Activated T-helper 1 cell treated with anti-CD3 and anti-CD28 coated beads, Interleukin-12 subunit alpha, Interleukin-12 subunit beta, Interleukin-2, Interleukin-4 antibody, amounts not matched to agents 30 ng/mL and 10 ng/mL and 1 ng/mL, durations not matched to agents 14 hours and 24 hours and 36 hours (primary cell): ENCODE measurements at regions of chr7 and their contacts with region 1.

Region 1: GRCh38 chr7:23105644-23106056 is at the start of gene KLHL7:
- DNase-seq: peak; percentile 95
- H3K4me3 Mint-ChIP-seq: peak within 1 kb of the TSS; percentile 94
- H3K27ac Mint-ChIP-seq: peak within 1 kb of the TSS; percentile 96
- H3K4me1 Mint-ChIP-seq: peaks cover 30% of the 10 kb centered on the region
- H3K27me3 Mint-ChIP-seq: no peaks in the 10 kb centered on the region
- total RNA-seq, gene KLHL7: 18.2 and 19.7 TPM in 2 replicates

Region 2: DNA sequence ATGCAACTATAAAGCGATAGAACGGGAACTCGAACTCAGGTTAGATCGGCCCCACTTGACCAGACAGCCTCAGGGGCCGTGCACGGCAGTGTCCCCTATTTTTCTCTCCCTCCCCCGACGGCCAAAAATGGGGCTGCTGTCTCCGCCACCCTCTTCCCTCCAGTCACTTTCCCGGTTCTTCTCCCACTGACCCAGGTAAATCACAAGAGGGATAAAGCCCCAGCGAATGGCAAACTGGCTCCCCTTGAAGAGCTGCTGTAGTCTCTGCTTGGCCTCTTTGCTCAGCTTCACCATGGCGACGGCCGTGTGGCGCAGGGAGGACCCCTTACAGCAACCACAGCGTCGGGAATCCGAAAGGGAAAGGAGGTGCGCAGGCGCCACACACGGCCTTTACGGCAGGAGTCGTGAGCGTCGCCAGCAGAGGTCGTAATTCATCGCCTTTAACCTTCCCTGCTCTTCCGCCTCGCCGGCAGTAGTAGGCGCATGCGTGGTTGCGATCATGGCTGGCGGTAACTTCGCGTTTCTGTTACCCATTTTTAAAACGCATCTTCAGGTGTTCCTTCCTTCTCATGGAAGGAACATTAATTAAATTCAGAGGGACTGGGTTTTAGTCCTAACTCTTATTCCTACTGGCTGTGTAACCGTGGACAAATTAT is 283.0 kb before region 1 on chr7 and contains the start of gene TOMM7:
- intact Hi-C with region 1: loop called (anchors 5 kb)
- DNase-seq: peak; percentile 81
- H3K4me3 Mint-ChIP-seq: peak within 1 kb of the TSS; percentile 98
- H3K27ac Mint-ChIP-seq: peak within 1 kb of the TSS; percentile 93
- H3K4me1 Mint-ChIP-seq: peaks cover 41% of the 10 kb centered on the region
- H3K27me3 Mint-ChIP-seq: peaks cover 17% of the 10 kb centered on the region
- total RNA-seq, gene TOMM7: 187 and 225 TPM in 2 replicates

Region 3: DNA sequence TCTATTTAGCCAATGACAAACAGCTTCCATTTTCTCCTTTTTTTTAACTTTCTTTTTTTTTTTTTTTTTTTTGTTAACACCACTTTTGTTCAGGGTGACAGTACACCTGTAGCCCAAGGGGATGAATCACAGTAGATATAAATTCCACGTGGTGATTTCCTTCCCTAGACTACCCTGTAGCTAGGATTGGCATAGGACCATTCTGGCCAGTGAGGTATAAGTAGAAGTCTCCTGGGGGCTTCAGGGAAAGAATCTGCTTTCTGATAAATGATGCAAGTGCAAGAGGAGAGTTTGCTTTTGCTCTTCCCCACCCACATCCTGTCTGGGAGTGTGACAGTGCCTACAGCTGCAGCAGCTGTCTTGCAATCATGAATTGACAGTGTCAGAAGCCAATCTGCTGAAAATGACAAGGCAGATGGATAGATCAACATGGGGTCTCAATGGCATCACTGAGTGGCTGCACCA is 219.8 kb before region 1 on chr7:
- intact Hi-C with region 1: loop called (anchors 5 kb)
- DNase-seq: peak; percentile 60
- H3K4me3 Mint-ChIP-seq: peak overlapping the region; percentile 59
- H3K27ac Mint-ChIP-seq: peak overlapping the region; percentile 93
- H3K4me1 Mint-ChIP-seq: peaks cover 41% of the 10 kb centered on the region
- H3K27me3 Mint-ChIP-seq: no peaks in the 10 kb centered on the region

Region 4: DNA sequence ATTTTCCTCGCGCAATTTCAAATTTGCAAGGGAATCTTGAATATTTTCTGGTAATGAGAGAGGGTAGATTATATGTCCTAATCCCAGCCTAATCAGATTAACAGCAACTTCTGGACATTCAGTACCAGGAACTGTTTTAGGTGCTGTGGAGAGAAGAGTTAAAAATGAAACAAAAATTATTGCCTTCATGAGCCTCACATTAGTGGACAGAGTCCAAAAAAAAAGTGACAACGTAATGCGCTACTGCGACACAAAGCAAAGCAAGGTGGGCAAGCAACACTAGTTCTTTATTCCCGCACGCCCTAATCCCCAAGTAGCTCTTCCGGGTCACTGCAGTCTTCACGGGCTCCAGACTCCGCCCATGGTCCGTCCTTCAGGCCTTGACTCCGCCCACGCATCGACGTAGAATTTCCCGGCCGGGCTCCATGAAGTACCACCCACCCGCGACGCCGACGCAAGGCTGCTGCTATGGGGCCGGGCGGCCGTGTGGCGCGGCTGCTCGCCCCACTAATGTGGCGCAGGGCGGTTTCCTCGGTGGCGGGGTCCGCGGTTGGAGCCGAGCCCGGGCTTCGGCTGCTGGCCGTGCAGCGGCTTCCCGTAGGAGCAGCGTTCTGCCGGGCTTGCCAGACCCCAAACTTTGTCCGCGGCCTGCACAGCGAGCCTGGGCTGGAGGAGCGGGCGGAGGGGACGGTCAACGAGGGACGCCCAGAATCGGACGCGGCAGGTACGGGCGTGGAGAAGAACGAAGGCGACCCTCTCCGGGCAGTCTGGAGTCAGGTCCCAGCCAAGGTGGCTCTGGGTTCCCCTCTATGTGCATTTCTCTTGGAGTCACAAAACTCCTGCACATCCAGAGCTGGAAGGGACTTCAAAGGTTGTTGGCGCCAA is 193.5 kb after region 1 on chr7 and contains the start of gene MALSU1:
- intact Hi-C with region 1: loop called (anchors 1 kb)
- DNase-seq: peak; percentile 93
- H3K4me3 Mint-ChIP-seq: peak within 1 kb of the TSS; percentile 88
- H3K27ac Mint-ChIP-seq: peak within 1 kb of the TSS; percentile 88
- H3K4me1 Mint-ChIP-seq: peaks cover 38% of the 10 kb centered on the region
- H3K27me3 Mint-ChIP-seq: peaks cover 4% of the 10 kb centered on the region
- total RNA-seq, gene MALSU1: 92.3 and 92.8 TPM in 2 replicates

Region 5: DNA sequence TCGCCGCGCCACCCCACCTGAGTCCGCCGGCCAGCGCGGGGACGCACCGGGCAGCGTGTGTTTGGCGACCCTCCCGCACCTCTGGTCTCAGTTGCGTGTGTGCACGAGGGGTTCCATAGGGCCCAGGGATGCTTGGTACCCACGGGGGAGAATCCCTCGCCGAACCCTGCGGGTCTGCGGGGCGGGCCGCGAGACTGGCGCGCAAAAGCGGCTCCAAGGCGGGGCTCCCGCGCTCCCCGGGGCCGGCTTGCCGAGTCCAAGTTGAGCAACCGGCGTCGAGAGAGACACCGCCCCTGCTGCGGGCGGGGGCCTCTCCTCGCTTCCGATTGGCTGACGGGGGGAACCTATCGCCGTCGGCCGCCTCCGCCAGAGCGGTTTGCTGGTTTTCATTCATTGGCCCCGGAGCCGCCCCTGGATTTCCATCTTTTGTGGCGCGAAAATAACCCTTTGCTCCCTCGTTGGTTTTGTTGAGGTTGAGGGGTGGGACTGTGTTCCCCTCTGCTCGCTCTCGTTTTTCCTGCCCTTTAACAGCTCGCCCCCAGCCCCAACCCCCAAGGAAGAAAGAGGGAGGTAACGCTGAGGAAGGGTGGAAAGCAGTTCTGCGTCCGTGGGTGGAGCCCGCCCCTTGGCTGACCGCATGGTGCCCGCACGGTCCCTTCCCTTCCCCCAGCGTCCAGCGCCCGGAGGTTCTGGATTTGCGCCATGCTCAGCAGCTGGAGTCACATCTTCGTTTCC is 368.6 kb after region 1 on chr7:
- intact Hi-C with region 1: loop called (anchors 2 kb)
- DNase-seq: peak; percentile 89
- H3K4me3 Mint-ChIP-seq: peak overlapping the region; percentile 83
- H3K27ac Mint-ChIP-seq: peak overlapping the region; percentile 57
- H3K4me1 Mint-ChIP-seq: peaks cover 39% of the 10 kb centered on the region
- H3K27me3 Mint-ChIP-seq: peaks cover 63% of the 10 kb centered on the region